CD4-positive, alpha-beta memory T cell (primary cell): ENCODE measurements at regions of chr19 and their contacts with region 1.

Region 1: DNA sequence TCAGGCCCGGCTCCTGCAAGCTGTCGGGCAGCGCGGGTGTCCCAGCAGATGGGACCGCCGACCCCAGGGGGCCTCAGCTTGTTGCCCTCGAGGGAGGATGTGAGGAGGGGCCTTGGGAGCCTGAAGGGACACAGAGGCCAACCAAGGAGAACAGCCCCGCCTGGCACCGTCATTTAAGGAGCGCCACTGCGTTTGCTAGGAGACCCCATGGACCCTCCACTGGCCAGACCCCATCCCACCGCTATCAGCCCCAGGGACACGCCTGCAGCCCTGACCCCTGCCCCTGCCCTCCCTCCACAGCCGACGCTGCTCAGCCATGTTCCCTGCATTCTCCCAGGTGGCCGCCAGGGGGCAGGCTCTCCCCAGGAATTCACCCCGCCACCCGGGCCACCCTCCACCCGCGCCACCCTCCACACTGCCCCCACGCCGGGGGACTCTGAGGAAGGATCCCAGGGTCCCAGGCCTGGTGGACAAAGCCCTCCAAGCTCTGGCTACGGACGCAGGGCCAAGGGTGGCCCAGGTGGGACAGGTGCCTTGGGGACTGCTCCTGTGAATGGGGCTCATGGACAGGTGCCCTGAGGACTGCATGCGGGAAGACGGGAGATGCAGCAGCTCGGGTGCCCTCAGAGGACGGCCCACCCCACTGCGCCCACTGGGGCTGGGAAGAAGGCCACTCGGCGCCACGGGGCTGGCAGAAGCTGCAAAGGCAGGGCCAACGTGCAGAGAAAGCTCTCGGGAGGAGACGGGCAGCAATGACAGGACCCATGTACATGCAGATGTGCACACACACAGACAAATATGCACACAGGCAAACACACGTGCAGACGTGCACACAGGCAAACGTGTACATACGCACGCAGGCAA is 34.4 kb downstream of the PIP5K1C start:
- DNase-seq: peak; percentile 69 to 80 (median 70)
- H3K4me3 ChIP-seq: no peak overlapping the region
- H3K4me3 Mint-ChIP-seq: no peak overlapping the region
- H3K27ac ChIP-seq: no peak overlapping the region
- H3K27ac Mint-ChIP-seq: peak overlapping the region in 3 of 7 donors; percentile 2 to 12 (median 4)
- H3K4me1 ChIP-seq: peaks cover 9% of the 10 kb centered on the region
- H3K4me1 Mint-ChIP-seq: peaks cover 4 to 12% (median 7%) of the 10 kb centered on the region in 4 donors
- H3K27me3 ChIP-seq: no peaks in the 10 kb centered on the region
- H3K27me3 Mint-ChIP-seq: no peaks in the 10 kb centered on the region

Region 2: GRCh38 chr19:3505598-3506383 is 160.1 kb before region 1 on chr19 and contains the start of gene FZR1:
- CTCF ChIA-PET with region 1: no interaction called
- POLR2A ChIA-PET with region 1: no interaction called
- intact Hi-C with region 1: no loop called
- DNase-seq: peak; percentile 99 to 100 (median 100)
- H3K4me3 ChIP-seq: peak within 1 kb of the TSS; percentile 73 to 77
- H3K4me3 Mint-ChIP-seq: peak within 1 kb of the TSS; percentile 87 to 96 (median 92)
- H3K27ac ChIP-seq: peak within 1 kb of the TSS; percentile 91
- H3K27ac Mint-ChIP-seq: peak within 1 kb of the TSS; percentile 96 to 99 (median 97)
- H3K4me1 ChIP-seq: peaks cover 52% of the 10 kb centered on the region
- H3K4me1 Mint-ChIP-seq: peaks cover 33 to 62% (median 46%) of the 10 kb centered on the region in 4 donors
- H3K27me3 ChIP-seq: no peaks in the 10 kb centered on the region
- H3K27me3 Mint-ChIP-seq: no peaks in the 10 kb centered on the region
- total RNA-seq, gene FZR1: 73.3 to 73.7 TPM

Region 3: GRCh38 chr19:3710265-3710812 is 44.4 kb after region 1 on chr19:
- CTCF ChIA-PET with region 1: interaction called, 27 read pairs
- POLR2A ChIA-PET with region 1: interaction called, 4 read pairs
- intact Hi-C with region 1: loop called (anchors 1 kb)
- DNase-seq: no peak
- H3K4me3 ChIP-seq: no peak overlapping the region
- H3K4me3 Mint-ChIP-seq: no peak overlapping the region
- H3K27ac ChIP-seq: no peak overlapping the region
- H3K27ac Mint-ChIP-seq: no peak overlapping the region
- H3K4me1 ChIP-seq: no peaks in the 10 kb centered on the region
- H3K4me1 Mint-ChIP-seq: peaks cover 0 to 8% (median 5%) of the 10 kb centered on the region in 4 donors
- H3K27me3 ChIP-seq: no peaks in the 10 kb centered on the region
- H3K27me3 Mint-ChIP-seq: peaks cover 0 to 5% of the 10 kb centered on the region in 2 donors